RWPE1 (cell line): ENCODE measurements at regions of chr1 and their contacts with region 1.

Region 1: DNA sequence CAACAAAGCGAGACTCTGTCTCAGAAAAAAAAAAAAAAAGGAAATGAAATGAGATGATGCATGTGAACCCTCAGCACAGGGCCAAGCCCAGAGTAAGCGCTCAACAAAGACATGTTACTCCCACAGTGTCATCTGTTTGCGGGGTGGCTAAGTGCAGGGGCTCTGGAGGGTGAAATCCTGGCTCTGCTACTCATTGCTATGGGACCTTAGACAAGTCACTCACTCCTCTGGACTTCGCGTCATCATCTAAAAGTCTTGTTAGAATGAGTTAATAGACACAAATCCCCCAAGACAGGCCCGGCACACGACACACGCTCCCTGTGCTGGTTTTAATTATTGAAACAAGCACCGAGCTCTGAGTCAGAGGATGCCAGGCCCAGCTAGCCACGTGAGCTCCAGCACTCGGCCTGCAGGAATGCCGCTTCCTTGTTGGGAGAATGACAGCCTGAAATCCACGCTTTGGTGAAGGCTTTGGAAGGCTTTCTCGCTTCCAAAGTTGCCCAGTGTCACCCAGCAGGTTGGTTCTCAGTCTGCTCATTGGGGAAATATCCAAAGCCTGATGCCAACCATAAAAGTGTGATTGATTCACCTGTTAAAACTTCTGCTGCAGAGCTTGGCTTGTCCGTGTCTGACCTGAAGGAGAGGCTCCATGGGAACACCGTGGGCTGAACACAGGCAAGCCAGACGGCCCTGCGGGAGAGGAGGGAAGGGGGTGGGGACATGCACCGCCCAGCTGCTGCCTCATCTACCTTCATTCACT is 36.7 kb upstream of the TARDBP start:
- DNase-seq: peak; percentile 82
- H3K27ac ChIP-seq: peak overlapping the region; percentile 84
- CTCF ChIP-seq: no peak

Region 2: DNA sequence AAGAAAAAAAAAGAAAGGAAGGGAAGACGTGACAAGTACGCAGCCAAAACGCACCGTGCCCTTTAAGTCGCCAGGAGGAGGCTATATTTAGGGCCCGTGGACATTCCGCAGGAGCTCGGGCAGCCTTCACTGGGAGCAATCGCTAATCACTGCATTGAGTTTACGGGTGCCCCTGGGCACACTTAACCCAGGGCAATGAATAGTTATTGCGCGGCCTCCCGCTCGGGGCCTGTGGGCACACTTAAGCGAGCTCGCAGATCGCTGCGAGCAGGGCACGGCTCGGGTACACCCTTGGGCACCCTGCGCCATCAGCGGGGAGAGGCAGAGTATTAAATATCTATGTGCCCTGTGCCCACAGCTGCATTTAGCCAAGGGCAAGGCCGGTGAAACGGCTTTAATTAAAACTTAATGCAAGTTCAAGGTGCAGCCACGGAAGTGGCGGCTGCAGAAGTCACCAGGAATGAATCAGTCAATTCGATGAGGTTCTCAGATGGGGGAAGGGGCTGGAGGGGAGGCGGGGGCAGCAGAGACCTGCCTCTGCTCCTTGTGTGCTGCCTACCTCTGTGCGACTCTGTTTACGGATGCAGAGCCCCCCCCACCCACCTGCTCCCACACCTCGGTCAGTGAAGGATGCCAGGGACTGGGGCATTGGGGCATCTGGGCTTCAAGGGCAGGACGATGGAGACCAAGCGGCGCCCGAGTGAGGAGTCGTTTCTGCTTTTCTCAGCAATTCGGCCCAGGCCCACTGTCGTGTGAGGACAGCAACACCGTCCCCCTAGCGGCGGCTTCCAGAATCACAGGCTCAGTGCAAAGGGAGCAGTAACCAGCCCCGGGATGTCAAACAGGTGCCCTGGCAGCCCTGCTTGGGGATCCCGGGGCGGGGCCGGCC is 15.1 kb before region 1 on chr1:
- CTCF ChIA-PET with region 1: interaction called, 14 read pairs
- POLR2A ChIA-PET with region 1: no interaction called
- DNase-seq: peak; percentile 80
- H3K27ac ChIP-seq: no peak overlapping the region
- CTCF ChIP-seq: peak; percentile 88

Region 3: GRCh38 chr1:11207898-11208611 is 232.3 kb after region 1 on chr1:
- CTCF ChIA-PET with region 1: no interaction called
- POLR2A ChIA-PET with region 1: no interaction called
- DNase-seq: no peak
- H3K27ac ChIP-seq: no peak overlapping the region
- CTCF ChIP-seq: no peak